Naive thymus-derived CD4-positive, alpha-beta T cell (primary cell): ENCODE measurements at regions of chr2 and their contacts with region 1.

Region 1: GRCh38 chr2:201118121-201118960 is 2.4 kb downstream of the CFLAR start:
- DNase-seq: peak; percentile 66 to 85 (median 79)
- ATAC-seq: peak; percentile 65
- H3K4me3 ChIP-seq: peak overlapping the region; percentile 87
- H3K4me3 Mint-ChIP-seq: peak overlapping the region; percentile 90 to 100 (median 97)
- H3K27ac ChIP-seq: peak overlapping the region; percentile 93
- H3K27ac Mint-ChIP-seq: peak overlapping the region; percentile 90 to 100 (median 98)
- H3K4me1 ChIP-seq: peaks cover 23 to 36% of the 10 kb centered on the region in 2 donors
- H3K4me1 Mint-ChIP-seq: peaks cover 31 to 64% (median 50%) of the 10 kb centered on the region in 7 donors
- H3K27me3 ChIP-seq: no peaks in the 10 kb centered on the region
- H3K27me3 Mint-ChIP-seq: peaks cover 0 to 2% (median 0%) of the 10 kb centered on the region in 5 donors

Region 2: GRCh38 chr2:200864176-200864976 is 254.0 kb before region 1 on chr2 and contains the start of gene CLK1:
- CTCF ChIA-PET with region 1: no interaction called
- POLR2A ChIA-PET with region 1: interaction called, 73 read pairs
- intact Hi-C with region 1: loop called (anchors 1 to 2 kb)
- DNase-seq: peak; percentile 87 to 97 (median 94)
- ATAC-seq: peak; percentile 89
- H3K4me3 ChIP-seq: peak within 1 kb of the TSS; percentile 100
- H3K4me3 Mint-ChIP-seq: peak within 1 kb of the TSS; percentile 89 to 98 (median 94)
- H3K27ac ChIP-seq: peak within 1 kb of the TSS; percentile 98
- H3K27ac Mint-ChIP-seq: peak within 1 kb of the TSS; percentile 99 to 100 (median 100)
- H3K4me1 ChIP-seq: peaks cover 23 to 26% of the 10 kb centered on the region in 2 donors
- H3K4me1 Mint-ChIP-seq: peaks cover 28 to 58% (median 48%) of the 10 kb centered on the region in 7 donors
- H3K27me3 ChIP-seq: no peaks in the 10 kb centered on the region
- H3K27me3 Mint-ChIP-seq: peaks cover 0 to 2% (median 0%) of the 10 kb centered on the region in 5 donors
- total RNA-seq, gene CLK1: 134 to 974 (median 502) TPM

Region 3: GRCh38 chr2:201071479-201072200 is 46.7 kb before region 1 on chr2 and contains the starts of genes HYCC2 and NDUFB3:
- CTCF ChIA-PET with region 1: interaction called, 12 read pairs
- POLR2A ChIA-PET with region 1: interaction called, 97 read pairs
- intact Hi-C with region 1: loop called (anchors 1 kb)
- DNase-seq: peak; percentile 79 to 96 (median 95)
- ATAC-seq: peak; percentile 98
- H3K4me3 ChIP-seq: peak within 1 kb of the TSS; percentile 92
- H3K4me3 Mint-ChIP-seq: peak within 1 kb of the TSS; percentile 91 to 99 (median 94)
- H3K27ac ChIP-seq: peak within 1 kb of the TSS; percentile 83
- H3K27ac Mint-ChIP-seq: peak within 1 kb of the TSS; percentile 86 to 99 (median 95)
- H3K4me1 ChIP-seq: peaks cover 32 to 36% of the 10 kb centered on the region in 2 donors
- H3K4me1 Mint-ChIP-seq: peaks cover 31 to 74% (median 55%) of the 10 kb centered on the region in 7 donors
- H3K27me3 ChIP-seq: no peaks in the 10 kb centered on the region
- H3K27me3 Mint-ChIP-seq: no peaks in the 10 kb centered on the region
- total RNA-seq, gene HYCC2: 34.8 to 38.3 (median 36.1) TPM
- total RNA-seq, gene NDUFB3: 18.3 to 109 (median 38.3) TPM

Region 4: DNA sequence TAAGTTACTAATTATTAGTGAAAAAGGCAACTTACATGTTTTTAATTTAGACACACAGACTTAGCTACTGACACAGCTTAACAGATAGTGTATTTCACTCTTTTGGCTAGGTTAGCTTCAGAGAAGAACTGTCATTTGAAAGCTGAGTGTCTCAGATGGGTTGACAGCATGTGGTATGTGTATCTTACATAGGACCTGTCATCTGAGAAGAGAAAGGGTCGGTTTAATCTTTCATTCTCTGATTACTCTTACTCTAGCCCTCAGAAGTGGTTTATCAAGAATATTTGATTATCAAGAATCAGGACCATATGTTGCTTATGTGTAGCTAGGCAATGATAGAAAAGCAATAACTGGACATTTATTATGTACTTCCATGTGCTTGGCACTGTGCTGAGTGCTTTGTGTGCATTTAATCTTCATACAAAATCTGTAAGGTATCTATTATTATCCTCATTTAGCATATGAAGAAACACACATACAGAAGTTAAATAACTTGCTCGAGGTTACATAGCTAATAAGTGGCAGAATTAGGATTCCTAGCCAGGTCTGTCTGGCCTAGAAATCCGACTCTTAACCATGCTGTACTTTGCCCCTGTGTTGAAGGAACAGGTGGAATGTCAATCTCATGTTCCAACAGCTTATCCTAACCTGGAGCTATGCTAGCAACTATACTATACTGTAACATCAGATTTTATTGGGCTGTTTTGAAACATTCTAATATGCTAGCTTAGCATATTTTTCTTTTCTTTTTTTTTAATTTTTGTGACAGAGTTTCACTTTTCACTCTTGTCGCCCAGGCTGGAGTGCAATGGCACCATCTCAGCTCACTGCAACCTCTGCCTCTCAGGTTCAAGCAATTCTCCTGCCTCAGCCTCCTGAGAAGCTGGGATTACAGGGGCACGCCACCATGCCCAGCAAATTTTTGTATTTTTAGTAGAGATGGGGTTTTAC is 26.0 kb after region 1 on chr2:
- CTCF ChIA-PET with region 1: interaction called, 5 read pairs
- POLR2A ChIA-PET with region 1: interaction called, 30 read pairs
- intact Hi-C with region 1: no loop called
- DNase-seq: no peak
- ATAC-seq: no peak
- H3K4me3 ChIP-seq: no peak overlapping the region
- H3K4me3 Mint-ChIP-seq: no peak overlapping the region
- H3K27ac ChIP-seq: no peak overlapping the region
- H3K27ac Mint-ChIP-seq: peak overlapping the region in 4 of 9 donors; percentile 8 to 56 (median 18)
- H3K4me1 ChIP-seq: no peaks in the 10 kb centered on the region
- H3K4me1 Mint-ChIP-seq: peaks cover 0 to 24% (median 8%) of the 10 kb centered on the region in 7 donors
- H3K27me3 ChIP-seq: no peaks in the 10 kb centered on the region
- H3K27me3 Mint-ChIP-seq: no peaks in the 10 kb centered on the region

Region 5: GRCh38 chr2:201257956-201258665 is 139.8 kb after region 1 on chr2:
- CTCF ChIA-PET with region 1: no interaction called
- POLR2A ChIA-PET with region 1: interaction called, 6 read pairs
- intact Hi-C with region 1: loop called (anchors 1 kb)
- DNase-seq: peak; percentile 72 to 99 (median 98)
- ATAC-seq: peak; percentile 84
- H3K4me3 ChIP-seq: peak overlapping the region; percentile 80
- H3K4me3 Mint-ChIP-seq: peak overlapping the region; percentile 85 to 100 (median 94)
- H3K27ac ChIP-seq: peak overlapping the region; percentile 91
- H3K27ac Mint-ChIP-seq: peak overlapping the region; percentile 95 to 99 (median 98)
- H3K4me1 ChIP-seq: peaks cover 63 to 71% of the 10 kb centered on the region in 2 donors
- H3K4me1 Mint-ChIP-seq: peaks cover 44 to 91% (median 75%) of the 10 kb centered on the region in 7 donors
- H3K27me3 ChIP-seq: no peaks in the 10 kb centered on the region
- H3K27me3 Mint-ChIP-seq: no peaks in the 10 kb centered on the region

Region 6: GRCh38 chr2:202033321-202034248 is 915.2 kb after region 1 on chr2 and contains the start of gene FZD7:
- CTCF ChIA-PET with region 1: no interaction called
- POLR2A ChIA-PET with region 1: no interaction called
- intact Hi-C with region 1: loop called in 1 of 2 experiments (anchors 5 kb)
- DNase-seq: peak; percentile 70 to 87 (median 81)
- ATAC-seq: peak; percentile 92
- H3K4me3 ChIP-seq: peak within 1 kb of the TSS; percentile 91
- H3K4me3 Mint-ChIP-seq: peak within 1 kb of the TSS in 9 of 10 donors; percentile 87 to 96 (median 92)
- H3K27ac ChIP-seq: peak within 1 kb of the TSS; percentile 44
- H3K27ac Mint-ChIP-seq: peak within 1 kb of the TSS in 8 of 9 donors; percentile 46 to 83 (median 72)
- H3K4me1 ChIP-seq: peaks cover 9 to 11% of the 10 kb centered on the region in 2 donors
- H3K4me1 Mint-ChIP-seq: peaks cover 6 to 17% (median 14%) of the 10 kb centered on the region in 7 donors
- H3K27me3 ChIP-seq: peaks cover 6 to 22% of the 10 kb centered on the region in 2 donors
- H3K27me3 Mint-ChIP-seq: peaks cover 0 to 45% (median 7%) of the 10 kb centered on the region in 5 donors
- total RNA-seq, gene FZD7: 0.27 to 0.99 (median 0.43) TPM

Region 7: DNA sequence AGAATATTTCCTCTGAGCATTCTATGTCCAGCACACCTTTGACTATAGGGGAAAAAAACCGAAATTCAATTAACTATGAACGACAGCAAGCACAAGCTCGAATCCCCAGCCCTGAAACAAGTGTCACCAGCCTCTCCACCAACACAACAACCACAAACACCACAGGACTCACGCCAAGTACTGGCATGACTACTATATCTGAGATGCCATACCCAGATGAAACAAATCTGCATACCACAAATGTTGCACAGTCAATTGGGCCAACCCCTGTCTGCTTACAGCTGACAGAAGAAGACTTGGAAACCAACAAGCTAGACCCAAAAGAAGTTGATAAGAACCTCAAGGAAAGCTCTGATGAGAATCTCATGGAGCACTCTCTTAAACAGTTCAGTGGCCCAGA is 1437.0 kb after region 1 on chr2:
- CTCF ChIA-PET with region 1: no interaction called
- POLR2A ChIA-PET with region 1: no interaction called
- intact Hi-C with region 1: no loop called
- DNase-seq: no peak
- ATAC-seq: no peak
- H3K4me3 ChIP-seq: no peak overlapping the region
- H3K4me3 Mint-ChIP-seq: no peak overlapping the region
- H3K27ac ChIP-seq: no peak overlapping the region
- H3K27ac Mint-ChIP-seq: no peak overlapping the region
- H3K4me1 ChIP-seq: no peaks in the 10 kb centered on the region
- H3K4me1 Mint-ChIP-seq: peaks cover 0 to 4% (median 0%) of the 10 kb centered on the region in 7 donors
- H3K27me3 ChIP-seq: no peaks in the 10 kb centered on the region
- H3K27me3 Mint-ChIP-seq: no peaks in the 10 kb centered on the region